B cell (primary cell): ENCODE measurements at regions of chr6 and their contacts with region 1.

Region 1: GRCh38 chr6:33700391-33701050 is 11.0 kb downstream of the UQCC2 start:
- DNase-seq: peak; percentile 86
- ATAC-seq: peak; percentile 64
- H3K4me3 ChIP-seq: no peak overlapping the region
- H3K4me3 Mint-ChIP-seq: peak overlapping the region; percentile 21
- H3K27ac ChIP-seq: peak overlapping the region in 1 of 2 donors; percentile 17
- H3K27ac Mint-ChIP-seq: peak overlapping the region; percentile 82
- H3K4me1 ChIP-seq: peaks cover 53 to 57% of the 10 kb centered on the region in 2 donors
- H3K4me1 Mint-ChIP-seq: peaks cover 66% of the 10 kb centered on the region
- H3K27me3 ChIP-seq: no peaks in the 10 kb centered on the region
- H3K27me3 Mint-ChIP-seq: no peaks in the 10 kb centered on the region
- CTCF ChIP-seq: peak; percentile 81

Region 2: DNA sequence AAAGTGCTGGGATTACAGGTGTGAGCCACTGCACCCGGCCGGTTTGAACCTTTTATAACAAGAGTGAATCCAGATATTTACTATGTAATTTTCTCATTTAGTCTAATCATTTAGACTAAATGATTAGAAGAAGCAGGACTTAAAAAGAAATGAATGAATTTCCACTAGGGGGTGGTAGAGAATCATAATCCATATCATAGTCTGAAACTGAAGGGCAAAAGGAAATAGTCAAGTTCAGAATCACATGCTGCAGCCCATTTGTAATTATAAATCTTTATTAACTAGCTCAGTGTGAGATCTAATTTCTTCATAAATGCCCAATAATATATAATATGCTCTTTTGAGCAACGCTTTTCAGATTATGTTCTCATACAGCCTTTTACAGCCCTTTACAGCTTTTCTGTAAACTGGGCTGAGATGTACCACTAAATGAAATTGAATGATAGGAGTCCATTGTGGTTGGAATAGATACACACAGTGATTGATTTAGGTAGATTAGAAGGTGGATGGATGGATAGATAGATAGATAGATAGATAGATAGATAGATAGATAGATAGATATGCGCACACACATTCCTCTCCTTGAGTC is 814.7 kb before region 1 on chr6:
- CTCF ChIA-PET with region 1: no interaction called
- POLR2A ChIA-PET with region 1: no interaction called
- intact Hi-C with region 1: no loop called
- DNase-seq: peak; percentile 87
- ATAC-seq: peak; percentile 65
- H3K4me3 ChIP-seq: no peak overlapping the region
- H3K4me3 Mint-ChIP-seq: no peak overlapping the region
- H3K27ac ChIP-seq: no peak overlapping the region
- H3K27ac Mint-ChIP-seq: no peak overlapping the region
- H3K4me1 ChIP-seq: peaks cover 14 to 15% of the 10 kb centered on the region in 2 donors
- H3K4me1 Mint-ChIP-seq: peaks cover 23% of the 10 kb centered on the region
- H3K27me3 ChIP-seq: no peaks in the 10 kb centered on the region
- H3K27me3 Mint-ChIP-seq: no peaks in the 10 kb centered on the region
- CTCF ChIP-seq: peak; percentile 78

Region 3: GRCh38 chr6:33599413-33599911 is 101.1 kb before region 1 on chr6:
- CTCF ChIA-PET with region 1: interaction called, 10 read pairs
- POLR2A ChIA-PET with region 1: no interaction called
- intact Hi-C with region 1: no loop called
- DNase-seq: no peak
- ATAC-seq: no peak
- H3K4me3 ChIP-seq: no peak overlapping the region
- H3K4me3 Mint-ChIP-seq: no peak overlapping the region
- H3K27ac ChIP-seq: no peak overlapping the region
- H3K27ac Mint-ChIP-seq: peak overlapping the region; percentile 38
- H3K4me1 ChIP-seq: peaks cover 10 to 15% of the 10 kb centered on the region in 2 donors
- H3K4me1 Mint-ChIP-seq: peaks cover 26% of the 10 kb centered on the region
- H3K27me3 ChIP-seq: no peaks in the 10 kb centered on the region
- H3K27me3 Mint-ChIP-seq: no peaks in the 10 kb centered on the region
- CTCF ChIP-seq: no peak

Region 4: DNA sequence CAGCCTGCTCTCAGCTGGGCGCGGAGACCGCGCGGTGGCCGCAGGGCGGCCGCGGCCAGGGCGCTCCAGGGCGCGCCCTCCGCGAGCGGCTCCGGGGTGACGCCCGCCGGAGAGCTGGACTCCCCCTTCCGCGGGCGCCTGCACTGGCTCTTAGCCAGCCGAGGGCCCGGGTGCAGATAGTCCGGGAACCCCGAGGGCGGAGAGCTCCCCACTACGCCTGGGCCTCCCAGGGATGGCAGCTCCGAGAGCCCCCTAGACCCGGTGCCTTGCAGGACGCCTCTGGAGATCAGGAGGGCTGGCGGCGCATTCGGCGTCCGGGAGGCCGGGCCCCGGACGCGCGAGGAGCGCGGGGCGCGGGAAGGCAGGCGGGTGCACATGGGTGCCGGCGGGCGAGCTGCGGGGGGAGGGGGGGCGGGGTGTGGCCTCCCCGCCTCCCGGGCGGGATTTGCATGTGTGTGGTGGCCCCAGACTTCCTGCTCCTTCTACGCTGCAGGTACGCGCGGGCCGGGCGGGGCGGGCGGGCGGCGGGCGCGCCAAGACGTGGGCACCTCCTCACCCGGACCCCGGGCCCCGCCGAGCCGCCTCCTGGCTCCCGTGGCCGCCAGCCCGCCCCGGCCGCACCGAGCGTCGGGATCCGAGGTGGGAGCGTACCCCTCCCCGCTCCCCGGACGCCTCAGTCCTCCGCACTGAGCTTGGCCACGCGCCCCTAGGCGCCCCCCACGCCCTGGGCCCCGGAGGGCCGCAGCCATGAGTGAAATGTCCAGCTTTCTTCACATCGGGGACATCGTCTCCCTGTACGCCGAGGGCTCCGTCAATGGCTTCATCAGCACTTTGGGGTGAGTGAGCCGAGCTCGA is 79.4 kb before region 1 on chr6 and contains the start of gene ITPR3:
- CTCF ChIA-PET with region 1: interaction called, 17 read pairs
- POLR2A ChIA-PET with region 1: no interaction called
- intact Hi-C with region 1: no loop called
- DNase-seq: peak; percentile 93
- ATAC-seq: peak; percentile 88
- H3K4me3 ChIP-seq: peak within 1 kb of the TSS; percentile 70 to 98 (median 95)
- H3K4me3 Mint-ChIP-seq: peak within 1 kb of the TSS; percentile 95
- H3K27ac ChIP-seq: peak within 1 kb of the TSS; percentile 80 to 92
- H3K27ac Mint-ChIP-seq: peak within 1 kb of the TSS; percentile 87
- H3K4me1 ChIP-seq: peaks cover 20 to 30% of the 10 kb centered on the region in 2 donors
- H3K4me1 Mint-ChIP-seq: peaks cover 49% of the 10 kb centered on the region
- H3K27me3 ChIP-seq: no peaks in the 10 kb centered on the region
- H3K27me3 Mint-ChIP-seq: no peaks in the 10 kb centered on the region
- CTCF ChIP-seq: no peak
- total RNA-seq, gene ITPR3: 61.9 and 62.4 TPM in 2 replicates

Region 5: GRCh38 chr6:33668927-33669326 is 31.6 kb before region 1 on chr6:
- CTCF ChIA-PET with region 1: interaction called, 18 read pairs
- POLR2A ChIA-PET with region 1: no interaction called
- intact Hi-C with region 1: no loop called
- DNase-seq: peak; percentile 76
- ATAC-seq: peak; percentile 91
- H3K4me3 ChIP-seq: no peak overlapping the region
- H3K4me3 Mint-ChIP-seq: no peak overlapping the region
- H3K27ac ChIP-seq: peak overlapping the region; percentile 37 to 53
- H3K27ac Mint-ChIP-seq: peak overlapping the region; percentile 89
- H3K4me1 ChIP-seq: peaks cover 0 to 16% of the 10 kb centered on the region in 2 donors
- H3K4me1 Mint-ChIP-seq: peaks cover 13% of the 10 kb centered on the region
- H3K27me3 ChIP-seq: no peaks in the 10 kb centered on the region
- H3K27me3 Mint-ChIP-seq: no peaks in the 10 kb centered on the region
- CTCF ChIP-seq: no peak

Region 6: GRCh38 chr6:33711140-33712129 is 10.9 kb after region 1 on chr6 and contains the start of gene UQCC2:
- CTCF ChIA-PET with region 1: interaction called, 58 read pairs
- POLR2A ChIA-PET with region 1: interaction called, 4 read pairs
- intact Hi-C with region 1: loop called (anchors 1 kb)
- DNase-seq: peak; percentile 99
- ATAC-seq: peak; percentile 87
- H3K4me3 ChIP-seq: peak within 1 kb of the TSS; percentile 62 to 96 (median 93)
- H3K4me3 Mint-ChIP-seq: peak within 1 kb of the TSS; percentile 87
- H3K27ac ChIP-seq: peak within 1 kb of the TSS; percentile 83 to 88
- H3K27ac Mint-ChIP-seq: peak within 1 kb of the TSS; percentile 93
- H3K4me1 ChIP-seq: peaks cover 16 to 28% of the 10 kb centered on the region in 2 donors
- H3K4me1 Mint-ChIP-seq: peaks cover 33% of the 10 kb centered on the region
- H3K27me3 ChIP-seq: no peaks in the 10 kb centered on the region
- H3K27me3 Mint-ChIP-seq: no peaks in the 10 kb centered on the region
- CTCF ChIP-seq: peak; percentile 44
- total RNA-seq, gene UQCC2: 16.6 and 17.1 TPM in 2 replicates